BJ (cell line): ENCODE measurements at regions of chr9 and their contacts with region 1.

Region 1: GRCh38 chr9:32378993-32379729 is 5.3 kb upstream of the ACO1 start:
- DNase-seq: no peak
- H3K4me3 ChIP-seq: no peak overlapping the region
- H3K27me3 ChIP-seq: no peaks in the 10 kb centered on the region; the same call in 1 of the 2 replicates
- CTCF ChIP-seq: peak; percentile 78

Region 2: DNA sequence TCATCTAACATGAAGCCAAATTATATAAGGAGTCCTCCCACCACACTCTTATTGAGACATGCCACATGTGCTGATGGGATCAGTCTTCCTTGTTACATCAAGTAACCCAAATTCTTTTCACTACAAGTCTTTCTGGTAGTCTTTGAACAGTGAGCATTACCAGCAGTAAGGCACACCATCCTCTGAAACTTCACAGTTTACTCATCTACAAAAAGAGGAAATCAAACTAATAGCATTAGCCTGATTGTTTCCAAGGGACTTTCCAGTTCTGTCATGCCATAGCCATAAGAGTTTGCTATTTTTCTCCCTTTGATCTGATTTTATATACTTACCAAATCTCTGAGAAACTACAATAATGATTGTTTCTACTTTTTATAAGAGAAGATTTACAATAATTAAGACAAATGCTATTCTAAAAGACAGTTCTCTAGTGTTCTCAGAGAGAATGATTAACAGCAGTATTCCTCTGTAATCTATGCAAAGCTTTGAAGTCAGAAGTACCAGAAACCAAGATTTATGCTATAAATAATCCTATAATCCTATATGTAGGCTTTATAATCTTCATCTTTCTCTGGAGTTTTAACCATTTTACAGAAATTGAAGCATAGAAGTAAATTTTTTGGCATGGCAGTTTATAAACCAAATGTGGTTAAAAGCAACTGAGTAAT is 160.9 kb before region 1 on chr9:
- CTCF ChIA-PET with region 1: no interaction called
- POLR2A ChIA-PET with region 1: no interaction called
- DNase-seq: no peak
- H3K4me3 ChIP-seq: no peak overlapping the region
- H3K27me3 ChIP-seq: no peaks in the 10 kb centered on the region
- CTCF ChIP-seq: no peak

Region 3: GRCh38 chr9:32395490-32396216 is 16.5 kb after region 1 on chr9:
- CTCF ChIA-PET with region 1: interaction called, 17 read pairs
- POLR2A ChIA-PET with region 1: no interaction called
- DNase-seq: peak; percentile 80
- H3K4me3 ChIP-seq: no peak overlapping the region
- H3K27me3 ChIP-seq: no peaks in the 10 kb centered on the region
- CTCF ChIP-seq: peak; percentile 58

Region 4: DNA sequence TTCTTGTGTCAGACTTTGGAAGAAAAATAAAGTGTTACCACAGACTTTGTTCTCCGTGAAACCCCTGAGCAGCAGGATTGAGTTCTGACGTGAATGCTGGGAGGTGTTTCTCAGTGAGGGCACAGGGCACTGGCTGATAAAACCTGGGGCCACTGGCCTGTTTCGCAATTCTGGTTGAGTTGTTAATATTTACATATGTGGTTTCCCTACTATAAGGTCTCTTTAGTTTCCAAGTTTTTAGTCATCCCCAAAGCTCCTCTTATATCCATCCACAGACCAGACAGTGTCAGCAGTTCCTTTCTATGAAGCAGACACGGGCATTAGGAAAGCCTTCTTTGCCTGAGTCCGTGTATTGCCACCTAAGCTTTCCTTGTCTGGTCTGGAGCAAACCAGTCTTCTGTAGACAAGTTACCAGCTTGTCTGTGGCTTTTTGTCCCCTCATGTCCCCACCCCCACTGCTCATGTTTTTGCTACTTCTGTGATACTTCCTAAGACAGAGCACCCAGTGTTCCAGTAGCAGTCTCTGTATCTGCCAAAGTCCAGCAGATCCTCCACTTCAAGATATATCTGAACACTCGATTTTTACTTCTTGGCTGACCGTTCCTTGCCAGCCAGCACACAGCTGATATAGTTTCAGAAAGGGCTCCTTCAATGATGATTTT is 47.2 kb after region 1 on chr9:
- CTCF ChIA-PET with region 1: interaction called, 171 read pairs
- POLR2A ChIA-PET with region 1: interaction called, 3 read pairs
- DNase-seq: no peak
- H3K4me3 ChIP-seq: no peak overlapping the region
- H3K27me3 ChIP-seq: no peaks in the 10 kb centered on the region
- CTCF ChIP-seq: no peak

Region 5: DNA sequence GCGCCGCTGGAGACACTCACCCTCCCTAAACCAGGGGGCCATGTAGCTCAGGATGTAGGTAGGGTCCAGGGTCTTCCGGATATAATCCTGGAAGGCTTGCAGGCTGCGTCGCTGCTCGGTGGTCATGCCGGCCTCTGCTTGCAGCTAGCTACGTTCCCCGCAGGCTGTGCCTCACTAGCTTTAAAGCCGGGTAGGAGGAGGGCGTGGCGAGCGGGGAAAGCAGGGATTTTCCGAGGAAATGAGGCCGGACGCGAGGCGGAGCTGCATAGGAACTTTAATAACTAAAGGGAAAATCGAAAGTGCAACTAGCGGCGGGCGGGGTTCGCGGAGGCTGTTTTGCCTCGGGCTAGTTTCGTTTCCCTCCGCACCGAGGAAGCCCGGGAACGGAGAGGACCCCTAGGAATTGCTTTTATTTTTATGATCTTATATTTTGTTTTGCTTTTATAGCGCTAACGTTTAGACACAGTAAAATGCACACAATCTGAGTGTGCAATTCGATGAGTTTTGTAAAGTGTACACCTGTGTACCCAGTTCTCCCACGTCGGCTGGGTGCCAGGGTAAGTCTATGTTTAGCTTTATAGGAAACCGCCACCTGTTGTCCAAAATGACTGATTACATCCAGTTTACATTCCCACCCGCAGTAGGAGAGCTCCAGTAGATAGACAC is 147.0 kb after region 1 on chr9 and contains the start of gene RIGI:
- CTCF ChIA-PET with region 1: interaction called, 41 read pairs
- POLR2A ChIA-PET with region 1: no interaction called
- DNase-seq: peak; percentile 59
- H3K4me3 ChIP-seq: peak within 1 kb of the TSS; percentile 68
- H3K27me3 ChIP-seq: no peaks in the 10 kb centered on the region
- CTCF ChIP-seq: peak; percentile 37
- polyA plus RNA-seq, gene RIGI: 2.4 and 5.1 TPM in 2 replicates

Region 6: GRCh38 chr9:32558408-32558934 is 179.3 kb after region 1 on chr9:
- CTCF ChIA-PET with region 1: interaction called, 44 read pairs
- POLR2A ChIA-PET with region 1: no interaction called
- DNase-seq: no peak
- H3K4me3 ChIP-seq: no peak overlapping the region
- H3K27me3 ChIP-seq: no peaks in the 10 kb centered on the region
- CTCF ChIP-seq: no peak

Region 7: DNA sequence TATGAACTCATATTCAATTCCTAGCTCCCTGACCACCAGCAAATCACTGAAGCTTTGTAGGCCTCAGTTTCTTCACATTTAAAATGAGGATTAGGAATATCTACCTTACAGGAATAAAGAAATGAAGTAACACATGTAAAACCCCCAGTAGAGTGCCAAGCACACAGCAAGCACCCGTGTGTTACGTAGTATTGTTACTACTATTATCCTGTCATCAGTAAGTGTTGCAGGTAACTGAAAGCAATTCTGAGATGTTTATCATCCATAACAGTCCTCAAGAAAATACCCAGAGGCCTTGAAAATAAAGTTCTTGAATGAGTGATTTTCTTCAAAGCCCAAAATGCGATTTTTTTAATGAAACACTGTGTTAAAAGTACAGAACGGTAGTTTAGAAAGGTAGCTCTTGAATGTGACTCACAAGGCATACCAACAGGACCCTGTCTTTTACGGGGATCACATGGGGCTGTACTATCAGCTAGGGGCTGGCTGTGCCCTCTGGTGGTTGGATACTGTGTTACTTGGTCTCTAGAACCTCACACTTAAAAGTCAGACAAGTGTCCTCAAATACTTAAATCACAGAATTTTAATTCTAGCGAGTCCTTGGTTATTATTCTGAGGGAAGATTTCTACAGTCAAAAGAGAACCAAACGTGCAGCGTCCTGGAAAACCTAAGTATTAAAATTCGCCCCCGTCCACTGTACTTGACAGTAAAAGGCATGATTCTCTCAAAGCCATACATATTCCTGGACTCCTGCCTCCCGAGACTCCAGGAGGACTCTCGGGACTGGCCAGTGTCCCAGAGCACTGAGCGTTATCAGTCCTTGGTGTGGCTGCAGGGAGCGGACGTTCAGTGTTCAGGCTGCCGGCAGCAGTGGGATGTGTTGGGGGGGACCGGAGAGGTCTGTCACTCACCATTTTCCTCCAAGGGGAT is 193.1 kb after region 1 on chr9:
- CTCF ChIA-PET with region 1: interaction called, 492 read pairs
- POLR2A ChIA-PET with region 1: interaction called, 3 read pairs
- DNase-seq: no peak
- H3K4me3 ChIP-seq: peak overlapping the region; percentile 93
- H3K27me3 ChIP-seq: no peaks in the 10 kb centered on the region
- CTCF ChIP-seq: peak; percentile 75

Region 8: GRCh38 chr9:32968101-32969011 is 589.2 kb after region 1 on chr9:
- CTCF ChIA-PET with region 1: interaction called, 91 read pairs
- POLR2A ChIA-PET with region 1: no interaction called
- DNase-seq: no peak
- H3K4me3 ChIP-seq: no peak overlapping the region
- H3K27me3 ChIP-seq: no peaks in the 10 kb centered on the region
- CTCF ChIP-seq: peak; percentile 72